CD4-positive, alpha-beta T cell (primary cell): ENCODE measurements at regions of chr3 and their contacts with region 1.

Region 1: DNA sequence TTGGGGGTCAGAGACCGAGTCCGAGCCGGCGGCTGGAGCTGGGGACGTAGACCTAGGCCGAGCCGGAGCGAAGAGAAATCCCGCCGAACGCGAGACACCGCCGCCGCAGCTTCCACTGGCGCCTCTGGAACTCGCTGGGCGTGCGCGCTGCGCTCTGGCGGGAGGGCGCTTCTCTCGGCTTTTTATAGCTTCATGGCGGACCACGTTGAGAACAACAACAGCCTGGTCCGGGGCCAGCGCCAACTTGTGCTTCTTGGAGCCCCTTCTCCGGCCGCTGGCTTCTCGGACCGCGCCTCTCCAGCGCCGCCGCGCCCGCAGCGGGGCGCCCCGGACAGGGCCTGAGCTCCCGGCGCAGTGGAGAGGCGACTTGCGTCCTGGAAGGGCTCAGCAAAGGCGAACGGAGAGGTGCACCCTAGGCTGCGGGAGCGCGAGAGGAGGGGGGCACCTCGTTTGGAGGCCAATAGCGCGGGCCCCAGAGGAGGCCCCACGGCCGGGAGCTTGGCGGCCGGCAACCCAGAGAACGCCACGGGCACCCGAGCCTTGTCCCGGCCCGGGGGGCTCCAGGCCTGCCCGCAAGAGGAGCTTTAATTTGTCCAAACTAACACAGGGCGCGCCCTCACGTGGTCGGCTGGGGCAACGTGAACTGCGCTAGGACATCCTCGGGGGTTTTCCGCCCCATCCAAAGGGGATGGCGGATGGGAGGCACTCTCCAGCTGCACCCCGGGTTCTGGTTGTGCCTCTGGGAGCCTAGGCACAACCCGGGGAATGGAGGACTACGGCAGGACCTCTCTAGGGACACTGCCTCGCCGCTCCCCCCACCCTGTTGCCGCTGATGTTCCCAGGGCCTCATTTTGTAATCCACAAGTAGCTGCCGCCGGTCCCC is 37.7 kb downstream of the HMCES start:
- DNase-seq: peak; percentile 82 to 94 (median 91)
- ATAC-seq: peak; percentile 41
- H3K4me3 ChIP-seq: peak overlapping the region; percentile 92
- H3K4me3 Mint-ChIP-seq: peak overlapping the region; percentile 96
- H3K27ac ChIP-seq: peak overlapping the region; percentile 15 to 67
- H3K27ac Mint-ChIP-seq: peak overlapping the region; percentile 82
- H3K4me1 ChIP-seq: peaks cover 32% of the 10 kb centered on the region
- H3K4me1 Mint-ChIP-seq: peaks cover 28% of the 10 kb centered on the region
- H3K27me3 ChIP-seq: no peaks in the 10 kb centered on the region
- H3K27me3 Mint-ChIP-seq: no peaks in the 10 kb centered on the region
- CTCF ChIP-seq: peak; percentile 80

Region 2: GRCh38 chr3:127590593-127591477 is 1725.5 kb before region 1 on chr3 and contains the start of gene TPRA1:
- CTCF ChIA-PET with region 1: no interaction called
- POLR2A ChIA-PET with region 1: no interaction called
- intact Hi-C with region 1: loop called in 1 of 2 experiments (anchors 10 kb)
- DNase-seq: peak; percentile 51 to 93 (median 74)
- ATAC-seq: peak; percentile 89
- H3K4me3 ChIP-seq: peak within 1 kb of the TSS; percentile 71
- H3K4me3 Mint-ChIP-seq: peak within 1 kb of the TSS; percentile 99
- H3K27ac ChIP-seq: peak within 1 kb of the TSS; percentile 54 to 82
- H3K27ac Mint-ChIP-seq: peak within 1 kb of the TSS; percentile 93
- H3K4me1 ChIP-seq: peaks cover 36% of the 10 kb centered on the region
- H3K4me1 Mint-ChIP-seq: peaks cover 43% of the 10 kb centered on the region
- H3K27me3 ChIP-seq: no peaks in the 10 kb centered on the region
- H3K27me3 Mint-ChIP-seq: no peaks in the 10 kb centered on the region
- CTCF ChIP-seq: no peak
- total RNA-seq, gene TPRA1: 7.5 to 7.8 TPM

Region 3: GRCh38 chr3:128969993-128970739 is 346.2 kb before region 1 on chr3:
- CTCF ChIA-PET with region 1: interaction called, 3 read pairs
- POLR2A ChIA-PET with region 1: interaction called, 4 read pairs
- intact Hi-C with region 1: loop called in 1 of 2 experiments (anchors 2 kb)
- DNase-seq: peak; percentile 44 to 85 (median 57)
- ATAC-seq: peak; percentile 80
- H3K4me3 ChIP-seq: no peak overlapping the region
- H3K4me3 Mint-ChIP-seq: no peak overlapping the region
- H3K27ac ChIP-seq: no peak overlapping the region
- H3K27ac Mint-ChIP-seq: no peak overlapping the region
- H3K4me1 ChIP-seq: peaks cover 5% of the 10 kb centered on the region
- H3K4me1 Mint-ChIP-seq: peaks cover 11% of the 10 kb centered on the region
- H3K27me3 ChIP-seq: no peaks in the 10 kb centered on the region
- H3K27me3 Mint-ChIP-seq: no peaks in the 10 kb centered on the region
- CTCF ChIP-seq: peak; percentile 97

Region 4: GRCh38 chr3:129183569-129184395 is 132.6 kb before region 1 on chr3 and contains the start of gene CNBP:
- CTCF ChIA-PET with region 1: no interaction called
- POLR2A ChIA-PET with region 1: interaction called, 17 read pairs
- intact Hi-C with region 1: loop called in 1 of 2 experiments (anchors 10 kb)
- DNase-seq: peak; percentile 82 to 97 (median 91)
- ATAC-seq: peak; percentile 95
- H3K4me3 ChIP-seq: peak within 1 kb of the TSS; percentile 68
- H3K4me3 Mint-ChIP-seq: peak within 1 kb of the TSS; percentile 100
- H3K27ac ChIP-seq: peak within 1 kb of the TSS; percentile 91 to 95
- H3K27ac Mint-ChIP-seq: peak within 1 kb of the TSS; percentile 100
- H3K4me1 ChIP-seq: peaks cover 37% of the 10 kb centered on the region
- H3K4me1 Mint-ChIP-seq: peaks cover 49% of the 10 kb centered on the region
- H3K27me3 ChIP-seq: no peaks in the 10 kb centered on the region
- H3K27me3 Mint-ChIP-seq: no peaks in the 10 kb centered on the region
- CTCF ChIP-seq: no peak
- total RNA-seq, gene CNBP: 260 to 267 TPM

Region 5: DNA sequence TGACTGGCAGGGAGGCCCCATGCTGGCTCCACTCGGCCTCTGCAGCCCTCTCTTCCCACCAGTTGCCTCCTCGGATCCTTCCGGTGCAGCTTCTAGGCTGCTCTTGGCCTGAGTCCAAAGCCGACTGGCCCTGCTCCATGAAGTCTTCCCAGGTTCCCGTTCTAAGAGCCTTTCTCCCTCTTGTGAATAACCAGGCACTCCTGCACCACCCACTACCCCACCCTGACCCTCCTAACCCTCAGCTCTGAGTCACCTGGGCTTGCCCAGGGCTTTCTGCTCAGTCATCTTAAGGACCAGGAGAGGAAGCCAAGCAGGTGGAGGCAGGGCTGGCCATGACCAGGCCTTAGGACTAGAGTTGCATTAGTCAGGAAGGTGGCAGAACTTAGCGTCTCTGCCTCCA is 104.6 kb before region 1 on chr3:
- CTCF ChIA-PET with region 1: no interaction called
- POLR2A ChIA-PET with region 1: no interaction called
- intact Hi-C with region 1: no loop called
- DNase-seq: peak in 1 of 14 experiments; percentile 41
- ATAC-seq: no peak
- H3K4me3 ChIP-seq: no peak overlapping the region
- H3K4me3 Mint-ChIP-seq: no peak overlapping the region
- H3K27ac ChIP-seq: no peak overlapping the region
- H3K27ac Mint-ChIP-seq: no peak overlapping the region
- H3K4me1 ChIP-seq: no peaks in the 10 kb centered on the region
- H3K4me1 Mint-ChIP-seq: no peaks in the 10 kb centered on the region
- H3K27me3 ChIP-seq: no peaks in the 10 kb centered on the region
- H3K27me3 Mint-ChIP-seq: no peaks in the 10 kb centered on the region
- CTCF ChIP-seq: no peak

Region 6: DNA sequence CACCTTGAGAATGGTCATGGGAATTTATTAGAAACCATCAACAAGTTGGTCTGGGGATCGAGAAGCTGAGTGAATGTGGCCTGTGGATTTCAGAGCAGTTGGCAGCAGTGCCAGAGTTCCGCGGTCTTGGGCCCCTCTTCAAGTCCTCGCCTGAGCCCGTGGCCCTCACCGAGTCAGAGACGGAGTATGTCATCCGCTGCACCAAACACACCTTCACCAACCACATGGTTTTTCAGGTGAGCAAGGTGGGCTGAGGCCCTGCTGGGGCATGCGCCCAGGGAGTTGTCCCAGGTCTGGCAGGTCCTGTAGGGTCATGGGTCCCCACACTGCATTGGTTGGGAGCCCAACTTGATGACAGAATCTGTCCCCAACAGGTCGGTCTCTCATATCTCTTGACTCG is 44.7 kb before region 1 on chr3:
- CTCF ChIA-PET with region 1: interaction called, 4 read pairs
- POLR2A ChIA-PET with region 1: interaction called, 13 read pairs
- intact Hi-C with region 1: no loop called
- DNase-seq: no peak
- ATAC-seq: no peak
- H3K4me3 ChIP-seq: no peak overlapping the region
- H3K4me3 Mint-ChIP-seq: no peak overlapping the region
- H3K27ac ChIP-seq: no peak overlapping the region
- H3K27ac Mint-ChIP-seq: no peak overlapping the region
- H3K4me1 ChIP-seq: no peaks in the 10 kb centered on the region
- H3K4me1 Mint-ChIP-seq: no peaks in the 10 kb centered on the region
- H3K27me3 ChIP-seq: no peaks in the 10 kb centered on the region
- H3K27me3 Mint-ChIP-seq: no peaks in the 10 kb centered on the region
- CTCF ChIP-seq: no peak

Region 7: DNA sequence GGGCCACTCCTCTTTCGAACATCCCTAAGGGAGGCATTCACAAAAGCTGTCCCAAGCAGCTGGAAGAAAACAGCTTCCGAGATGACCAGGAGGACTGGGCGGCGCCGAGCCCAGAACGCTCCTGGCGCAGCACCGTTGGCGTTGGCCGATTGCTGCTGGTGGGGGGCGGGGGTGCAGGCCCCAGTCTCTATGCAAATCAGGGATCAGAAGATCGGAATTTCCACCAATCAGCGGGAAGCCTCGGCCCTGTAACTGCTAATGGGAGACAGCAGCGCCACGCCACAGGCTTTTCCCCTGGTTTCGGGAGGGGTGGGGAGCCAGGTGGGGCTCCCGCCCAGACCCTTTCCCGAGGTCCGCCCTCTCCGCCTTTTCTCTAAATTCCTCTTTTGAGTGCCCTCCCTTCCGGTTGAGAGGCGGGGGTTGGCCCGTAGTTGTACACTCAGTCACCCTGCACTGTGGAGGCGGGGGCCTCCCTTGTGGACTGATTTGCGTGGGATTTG is 10.7 kb before region 1 on chr3:
- CTCF ChIA-PET with region 1: interaction called, 12 read pairs
- POLR2A ChIA-PET with region 1: interaction called, 34 read pairs
- intact Hi-C with region 1: no loop called
- DNase-seq: peak in 5 of 14 experiments; percentile 28 to 57 (median 34)
- ATAC-seq: peak; percentile 56
- H3K4me3 ChIP-seq: peak overlapping the region; percentile 1
- H3K4me3 Mint-ChIP-seq: peak overlapping the region; percentile 25
- H3K27ac ChIP-seq: no peak overlapping the region
- H3K27ac Mint-ChIP-seq: peak overlapping the region; percentile 65
- H3K4me1 ChIP-seq: peaks cover 17% of the 10 kb centered on the region
- H3K4me1 Mint-ChIP-seq: peaks cover 28% of the 10 kb centered on the region
- H3K27me3 ChIP-seq: no peaks in the 10 kb centered on the region
- H3K27me3 Mint-ChIP-seq: no peaks in the 10 kb centered on the region
- CTCF ChIP-seq: no peak

Region 8: GRCh38 chr3:129428376-129429079 is 112.2 kb after region 1 on chr3 and contains the start of gene EFCAB12:
- CTCF ChIA-PET with region 1: interaction called, 3 read pairs
- POLR2A ChIA-PET with region 1: interaction called, 10 read pairs
- intact Hi-C with region 1: no loop called
- DNase-seq: peak; percentile 79 to 95 (median 88)
- ATAC-seq: peak; percentile 95
- H3K4me3 ChIP-seq: peak within 1 kb of the TSS; percentile 66
- H3K4me3 Mint-ChIP-seq: peak within 1 kb of the TSS; percentile 78
- H3K27ac ChIP-seq: peak within 1 kb of the TSS in 1 of 2 donors; percentile 38
- H3K27ac Mint-ChIP-seq: peak within 1 kb of the TSS; percentile 73
- H3K4me1 ChIP-seq: peaks cover 15% of the 10 kb centered on the region
- H3K4me1 Mint-ChIP-seq: peaks cover 22% of the 10 kb centered on the region
- H3K27me3 ChIP-seq: no peaks in the 10 kb centered on the region
- H3K27me3 Mint-ChIP-seq: no peaks in the 10 kb centered on the region
- CTCF ChIP-seq: no peak
- total RNA-seq, gene EFCAB12: 3.2 to 3.4 TPM